Thyroid gland (tissue), 4 donors: ENCODE measurements at regions of chr17 and their contacts with region 1.

Region 1: GRCh38 chr17:39235555-39236449 is 10.1 kb upstream of the STAC2 start:
- DNase-seq: peak in 1 of 2 donors; percentile 22
- H3K4me3 ChIP-seq: no peak overlapping the region
- H3K27ac ChIP-seq: no peak overlapping the region
- H3K4me1 ChIP-seq: peaks cover 0 to 24% of the 10 kb centered on the region in 2 donors
- H3K27me3 ChIP-seq: no peaks in the 10 kb centered on the region
- CTCF ChIP-seq: peak in 4 of 6 experiments; percentile 39 to 45 (median 44)
- POLR2A ChIP-seq: no peak

Region 2: DNA sequence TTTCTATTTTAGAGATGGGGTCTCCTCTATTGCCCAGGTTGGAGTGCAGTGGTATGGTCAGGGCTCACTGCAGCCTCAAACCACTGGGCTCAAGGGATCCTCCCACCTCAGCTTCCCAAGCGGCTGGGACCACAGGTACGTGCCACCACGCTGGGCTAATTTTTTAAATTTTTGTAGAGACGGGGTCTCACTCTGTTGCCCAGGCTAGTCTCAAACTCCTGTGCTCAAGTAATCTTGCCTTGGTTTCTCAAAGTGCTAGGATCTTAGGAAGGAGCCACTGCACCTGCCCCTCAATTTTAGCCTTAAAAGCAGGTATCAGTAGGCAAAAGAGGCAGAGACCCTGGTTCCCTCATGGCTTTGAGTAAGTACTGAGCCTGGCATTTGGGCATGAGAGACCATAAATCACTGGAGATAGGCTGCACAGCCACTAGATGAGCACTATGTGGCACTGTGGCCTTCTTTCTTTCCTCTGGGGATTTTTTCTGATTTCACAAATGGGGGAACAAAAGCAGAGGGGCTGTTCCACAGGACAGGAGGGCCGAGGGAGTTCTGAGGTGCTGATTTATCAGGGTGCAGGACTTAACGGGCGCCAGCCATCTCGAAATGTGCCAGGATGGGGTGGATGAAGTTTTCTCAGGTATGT is 166.6 kb before region 1 on chr17:
- intact Hi-C with region 1: loop called (anchors 10 kb)
- DNase-seq: peak in 1 of 2 donors; percentile 12
- H3K4me3 ChIP-seq: no peak overlapping the region
- H3K27ac ChIP-seq: no peak overlapping the region
- H3K4me1 ChIP-seq: no peaks in the 10 kb centered on the region
- H3K27me3 ChIP-seq: no peaks in the 10 kb centered on the region
- CTCF ChIP-seq: peak in 5 of 6 experiments; percentile 34 to 56 (median 48)
- POLR2A ChIP-seq: no peak

Region 3: GRCh38 chr17:39174907-39175694 is 60.7 kb before region 1 on chr17:
- intact Hi-C with region 1: no loop called
- DNase-seq: peak; percentile 65 to 70
- H3K4me3 ChIP-seq: no peak overlapping the region
- H3K27ac ChIP-seq: no peak overlapping the region
- H3K4me1 ChIP-seq: peaks cover 0 to 7% of the 10 kb centered on the region in 2 donors
- H3K27me3 ChIP-seq: no peaks in the 10 kb centered on the region
- CTCF ChIP-seq: peak; percentile 53 to 76 (median 67)
- POLR2A ChIP-seq: no peak